Activated CD4-positive, alpha-beta T cell treated with anti-CD3 and anti-CD28 coated beads, Interleukin-2, amount 10 ng/mL, durations not matched to agents 7 days and 5 days (primary cell): ENCODE measurements at regions of chr4 and their contacts with region 1.

Region 1: DNA sequence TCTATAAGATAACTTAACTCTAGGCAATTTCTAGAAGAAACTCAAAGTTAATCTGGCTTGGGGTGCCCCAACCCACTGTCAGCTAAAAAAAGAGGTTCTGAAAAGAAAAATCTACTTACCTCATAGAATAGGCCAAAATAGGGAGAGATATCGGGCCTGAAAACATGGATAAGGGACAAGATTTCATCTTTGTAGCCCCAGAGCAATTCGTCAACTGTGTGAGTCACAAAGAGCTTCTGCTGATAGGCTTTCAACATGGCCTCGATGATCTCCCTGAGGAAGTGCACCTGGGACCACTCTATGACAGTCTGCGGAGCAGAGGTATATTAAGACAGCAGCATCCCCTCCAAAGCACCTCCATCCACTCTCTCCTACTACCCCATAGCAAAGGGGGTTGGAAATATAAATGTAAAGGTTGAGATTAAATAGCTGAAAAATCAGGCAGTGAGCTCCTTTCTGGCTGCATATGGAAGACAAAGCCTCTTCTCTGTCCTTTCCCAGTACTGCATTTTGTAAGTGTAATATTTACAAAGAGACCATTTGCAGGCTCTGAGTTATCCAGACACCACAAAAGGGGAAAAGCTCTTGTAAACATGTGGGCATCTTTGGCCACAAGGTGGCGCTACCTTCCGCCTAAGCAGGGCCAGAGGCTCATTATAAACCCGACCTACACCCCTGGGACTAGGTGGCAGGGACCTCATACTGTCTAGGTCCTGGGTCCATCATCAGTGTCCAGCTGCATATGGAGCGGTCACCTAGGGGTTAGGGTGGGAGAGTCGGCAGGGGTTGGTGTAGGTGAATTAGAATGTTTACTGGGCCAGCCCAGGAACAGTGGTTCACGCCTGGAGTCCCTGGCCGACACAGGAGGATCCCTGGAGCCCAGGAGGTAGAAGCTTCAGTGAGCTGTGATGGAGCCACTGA is 31.5 kb upstream of the NUP54 start:
- DNase-seq: peak; percentile 86
- H3K4me3 Mint-ChIP-seq: no peak overlapping the region
- H3K27ac Mint-ChIP-seq: no peak overlapping the region
- H3K4me1 Mint-ChIP-seq: no peaks in the 10 kb centered on the region
- H3K27me3 Mint-ChIP-seq: no peaks in the 10 kb centered on the region

Region 2: GRCh38 chr4:76067652-76068286 is 111.9 kb before region 1 on chr4:
- CTCF ChIA-PET with region 1: no interaction called
- POLR2A ChIA-PET with region 1: no interaction called
- DNase-seq: peak; percentile 82
- H3K4me3 Mint-ChIP-seq: no peak overlapping the region
- H3K27ac Mint-ChIP-seq: no peak overlapping the region
- H3K4me1 Mint-ChIP-seq: no peaks in the 10 kb centered on the region
- H3K27me3 Mint-ChIP-seq: no peaks in the 10 kb centered on the region

Region 3: DNA sequence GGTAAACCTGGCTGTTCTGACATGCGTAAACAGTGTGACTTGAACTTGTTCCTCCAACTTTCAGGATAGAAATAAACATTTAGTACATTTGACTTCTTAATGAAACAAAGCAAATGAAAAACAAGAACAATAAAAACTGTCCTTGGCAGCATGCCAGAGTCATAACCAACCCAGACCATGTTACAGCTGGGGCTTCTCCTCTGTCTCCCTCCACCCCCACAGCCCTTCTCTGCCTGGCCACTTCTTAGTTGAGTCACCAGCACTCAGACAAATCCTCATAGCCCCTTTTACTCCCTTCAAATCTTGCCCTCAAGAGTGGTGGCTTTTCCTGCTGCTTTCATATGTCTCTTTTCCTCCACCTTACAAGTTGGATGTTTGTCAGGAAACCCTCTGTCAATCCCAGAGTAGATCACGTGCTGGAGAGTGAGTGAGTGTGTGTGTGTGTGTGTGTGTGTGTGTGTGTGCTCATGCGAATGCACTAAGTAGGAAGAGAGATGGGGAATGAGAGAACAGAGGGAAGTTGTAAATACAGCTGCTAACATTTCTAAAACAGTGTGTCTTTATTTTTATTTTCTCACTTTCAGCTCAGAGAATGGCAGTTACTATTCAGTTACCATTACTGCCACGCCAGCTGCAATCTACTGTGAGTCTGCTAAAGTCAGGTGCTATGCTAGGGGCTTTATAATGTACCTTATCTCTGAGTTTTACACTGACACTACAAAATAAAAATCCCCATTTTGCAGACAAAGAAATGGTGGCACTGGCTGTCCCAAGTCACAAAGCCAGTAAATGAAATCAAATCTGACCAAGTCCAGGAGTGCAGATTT is 19.0 kb after region 1 on chr4:
- CTCF ChIA-PET with region 1: interaction called, 11 read pairs
- POLR2A ChIA-PET with region 1: no interaction called
- DNase-seq: peak; percentile 14
- H3K4me3 Mint-ChIP-seq: no peak overlapping the region
- H3K27ac Mint-ChIP-seq: peak overlapping the region; percentile 36
- H3K4me1 Mint-ChIP-seq: peaks cover 33% of the 10 kb centered on the region
- H3K27me3 Mint-ChIP-seq: no peaks in the 10 kb centered on the region

Region 4: GRCh38 chr4:76377911-76378310 is 198.3 kb after region 1 on chr4:
- CTCF ChIA-PET with region 1: interaction called, 19 read pairs
- POLR2A ChIA-PET with region 1: no interaction called
- DNase-seq: peak; percentile 52
- H3K4me3 Mint-ChIP-seq: no peak overlapping the region
- H3K27ac Mint-ChIP-seq: no peak overlapping the region
- H3K4me1 Mint-ChIP-seq: no peaks in the 10 kb centered on the region
- H3K27me3 Mint-ChIP-seq: peaks cover 6% of the 10 kb centered on the region